Transverse colon (tissue), 4 donors: ENCODE measurements at regions of chr11 and their contacts with region 1.

Region 1: GRCh38 chr11:13772223-13773046 is 104.0 kb downstream of the FAR1 start:
- DNase-seq: no peak
- H3K4me3 ChIP-seq: no peak overlapping the region
- H3K27ac ChIP-seq: no peak overlapping the region
- H3K4me1 ChIP-seq: peaks cover 0 to 5% (median 0%) of the 10 kb centered on the region in 4 donors
- H3K27me3 ChIP-seq: no peaks in the 10 kb centered on the region
- CTCF ChIP-seq: peak; percentile 35 to 52 (median 49)
- EP300 ChIP-seq: no peak
- POLR2A ChIP-seq: no peak

Region 2: DNA sequence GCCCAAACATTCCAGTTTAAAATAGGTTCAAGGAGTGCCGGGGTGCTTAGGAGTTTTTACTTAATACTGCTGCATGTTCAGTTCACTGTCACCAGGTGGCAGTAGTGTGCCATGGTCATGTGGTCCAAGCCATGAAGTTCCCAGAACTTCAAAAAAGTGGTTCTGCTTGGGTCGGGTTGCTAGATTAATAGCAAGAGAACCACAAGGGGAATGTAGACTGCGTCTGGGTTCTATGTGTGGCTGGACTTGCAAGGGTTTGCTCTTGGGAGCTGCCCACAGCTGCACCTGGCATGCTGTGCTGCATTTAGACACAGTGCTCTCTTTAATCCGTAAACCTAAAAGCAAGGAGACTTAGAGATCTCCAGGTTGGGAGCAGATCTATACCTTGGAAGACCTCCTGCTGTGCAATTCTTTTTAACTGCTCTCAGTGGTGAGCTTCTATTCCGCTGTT is 183.6 kb after region 1 on chr11:
- in situ Hi-C with region 1: loop called in 1 of 4 experiments (anchors 10 kb)
- intact Hi-C with region 1: no loop called
- DNase-seq: peak; percentile 64
- H3K4me3 ChIP-seq: no peak overlapping the region
- H3K27ac ChIP-seq: no peak overlapping the region
- H3K4me1 ChIP-seq: peaks cover 0 to 4% (median 2%) of the 10 kb centered on the region in 4 donors
- H3K27me3 ChIP-seq: peaks cover under 1% of the 10 kb centered on the region
- CTCF ChIP-seq: peak; percentile 89 to 94 (median 90)
- EP300 ChIP-seq: no peak
- POLR2A ChIP-seq: no peak

Region 3: DNA sequence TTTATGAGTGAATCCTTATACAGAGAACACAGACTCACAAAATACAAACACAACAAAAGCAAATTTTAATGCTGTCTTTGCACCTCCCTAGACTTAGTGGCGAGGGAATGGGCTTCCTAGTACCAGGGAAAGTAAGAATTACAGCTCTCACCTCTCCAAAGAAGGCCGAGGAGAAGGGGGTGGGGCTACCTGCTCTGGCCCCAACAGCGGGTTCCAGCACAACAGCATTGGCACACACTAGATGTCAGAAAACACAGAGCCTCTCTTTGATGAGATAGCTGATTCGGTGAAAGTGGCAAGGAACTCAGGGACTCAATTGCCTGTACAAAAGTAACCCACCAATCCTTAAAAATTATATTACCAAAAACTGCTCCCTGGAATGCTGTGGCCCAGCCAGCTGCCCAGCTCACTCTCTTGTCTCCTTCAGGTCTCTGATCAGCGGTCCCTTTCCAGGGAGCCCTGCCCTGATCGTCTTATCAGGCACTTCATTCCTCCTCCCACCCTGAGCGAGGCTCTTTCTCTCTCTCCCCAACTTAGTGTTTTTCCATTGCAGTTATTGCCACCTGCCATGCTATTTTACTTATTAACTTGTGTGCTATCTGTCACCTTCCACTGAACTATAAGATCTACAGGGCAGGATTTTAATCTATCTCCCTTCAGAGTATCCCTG is 220.8 kb after region 1 on chr11:
- in situ Hi-C with region 1: no loop called
- intact Hi-C with region 1: no loop called
- DNase-seq: peak; percentile 14
- H3K4me3 ChIP-seq: peak overlapping the region in 1 of 4 donors; percentile 38
- H3K27ac ChIP-seq: peak overlapping the region in 3 of 4 donors; percentile 71 to 76 (median 73)
- H3K4me1 ChIP-seq: peaks cover 14 to 41% (median 33%) of the 10 kb centered on the region in 4 donors
- H3K27me3 ChIP-seq: no peaks in the 10 kb centered on the region
- CTCF ChIP-seq: no peak
- EP300 ChIP-seq: no peak
- POLR2A ChIP-seq: no peak

Region 4: DNA sequence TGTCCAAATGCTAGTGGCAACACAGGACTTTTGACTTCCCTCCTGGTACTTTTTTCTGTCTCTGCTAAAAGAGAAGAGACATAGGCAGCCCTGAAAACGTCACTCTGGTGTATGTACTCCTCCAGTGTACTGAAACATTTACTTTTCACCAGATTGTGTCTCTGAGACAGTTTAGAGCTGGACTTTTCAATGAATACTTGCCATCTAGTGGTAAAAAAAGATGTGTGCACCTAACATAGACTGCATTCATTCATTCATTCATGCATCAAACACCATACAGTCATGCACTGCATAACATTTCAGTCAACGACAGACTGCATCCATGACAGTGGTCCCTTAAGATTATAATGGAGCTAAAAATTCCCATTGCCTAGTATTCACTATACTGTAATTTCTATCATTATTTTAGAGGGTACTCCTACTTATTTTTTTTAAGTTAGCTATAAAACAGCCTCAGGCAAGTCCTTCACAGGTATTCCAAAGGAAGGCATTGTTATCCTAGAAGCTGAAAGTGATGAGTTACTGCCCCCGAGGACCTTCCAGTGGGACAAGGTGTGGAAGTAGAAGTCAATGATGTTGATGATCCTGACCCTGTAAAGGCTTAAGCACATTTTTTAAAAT is 376.3 kb after region 1 on chr11:
- in situ Hi-C with region 1: loop called in 1 of 4 experiments (anchors 10 kb)
- intact Hi-C with region 1: no loop called
- DNase-seq: no peak
- H3K4me3 ChIP-seq: no peak overlapping the region
- H3K27ac ChIP-seq: no peak overlapping the region
- H3K4me1 ChIP-seq: no peaks in the 10 kb centered on the region
- H3K27me3 ChIP-seq: no peaks in the 10 kb centered on the region
- CTCF ChIP-seq: peak; percentile 59 to 76 (median 60)
- EP300 ChIP-seq: no peak
- POLR2A ChIP-seq: no peak

Region 5: DNA sequence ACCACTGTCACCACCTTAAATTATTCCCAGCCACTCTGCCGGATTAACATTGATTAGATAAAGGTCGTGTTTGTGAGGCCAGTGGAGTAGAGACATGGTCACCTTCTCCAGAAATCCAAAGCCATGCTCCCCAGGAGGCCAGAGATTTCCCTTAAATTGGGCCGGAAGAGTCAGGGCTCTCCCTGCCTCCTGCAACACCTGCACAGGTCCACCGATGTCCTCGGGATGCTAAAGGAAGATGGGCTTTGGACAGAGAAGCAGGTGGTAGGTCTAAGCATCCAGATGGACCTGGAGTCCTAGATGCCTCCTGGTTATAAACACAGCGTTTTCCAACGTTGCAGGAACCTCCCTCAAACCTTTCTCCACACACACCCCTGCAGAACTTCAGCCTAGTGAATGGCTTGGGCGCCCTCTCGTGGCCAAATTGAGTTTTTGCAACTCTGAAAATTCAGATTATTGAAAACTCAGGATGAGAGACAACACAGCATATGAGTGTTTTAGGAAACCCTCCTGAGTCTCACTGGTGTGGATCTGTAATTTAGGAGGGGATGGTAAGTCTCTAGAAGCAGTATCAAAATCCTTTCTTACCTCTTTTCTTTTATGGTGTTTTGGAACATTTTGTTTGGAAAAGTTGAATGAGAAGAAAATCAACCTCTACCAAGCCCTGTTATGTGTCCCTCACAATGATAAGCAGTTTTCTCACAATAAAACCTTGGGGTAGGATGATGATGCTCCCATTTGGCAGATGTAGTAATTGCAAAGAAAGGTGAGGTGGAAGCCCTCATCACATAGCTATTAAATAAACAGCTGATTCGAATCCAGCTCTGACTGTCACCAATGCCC is 476.9 kb after region 1 on chr11:
- in situ Hi-C with region 1: loop called (anchors 10 to 25 kb)
- intact Hi-C with region 1: no loop called
- DNase-seq: peak; percentile 71
- H3K4me3 ChIP-seq: no peak overlapping the region
- H3K27ac ChIP-seq: no peak overlapping the region
- H3K4me1 ChIP-seq: no peaks in the 10 kb centered on the region
- H3K27me3 ChIP-seq: no peaks in the 10 kb centered on the region
- CTCF ChIP-seq: peak; percentile 85 to 90 (median 89)
- EP300 ChIP-seq: no peak
- POLR2A ChIP-seq: no peak

Region 6: DNA sequence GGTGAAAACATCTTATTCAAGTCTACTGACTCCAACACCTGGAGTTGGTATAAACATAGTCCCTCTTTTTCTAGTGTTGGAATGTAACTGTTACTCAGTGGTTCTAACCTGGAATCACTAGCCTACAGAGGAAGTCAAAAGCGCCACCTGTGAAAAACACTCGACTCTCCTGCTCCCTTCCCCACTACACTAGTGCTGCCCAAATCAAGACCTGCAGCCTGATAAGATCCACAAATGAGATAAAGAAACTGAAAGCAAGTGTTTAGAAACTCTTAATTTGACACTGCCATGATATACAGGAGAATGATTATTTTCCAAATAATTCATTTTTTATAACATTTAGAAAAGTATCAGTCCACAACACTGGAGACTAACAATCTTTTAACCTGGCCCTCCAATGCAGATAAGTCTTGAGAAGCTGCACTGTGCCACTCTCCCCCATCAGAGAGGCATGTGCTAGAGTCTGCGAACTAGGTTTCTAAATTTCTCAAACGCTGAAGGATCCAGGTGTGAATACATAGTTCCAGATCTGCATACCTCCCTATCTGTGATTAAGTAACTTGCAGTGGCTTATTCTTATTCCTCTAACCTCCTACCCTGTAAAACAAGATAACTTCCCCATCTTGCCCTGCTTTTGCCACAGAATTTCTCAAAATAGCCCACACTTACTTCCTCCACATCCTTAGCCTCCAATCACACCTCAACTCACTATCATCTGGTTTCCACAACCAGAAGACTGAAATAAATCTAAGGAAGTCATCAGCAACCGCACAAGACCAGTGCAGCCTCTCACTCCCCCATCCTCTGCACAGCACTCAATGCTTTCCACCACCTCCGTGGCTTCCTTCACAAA is 498.5 kb after region 1 on chr11:
- in situ Hi-C with region 1: loop called in 1 of 4 experiments (anchors 25 kb)
- intact Hi-C with region 1: no loop called
- DNase-seq: no peak
- H3K4me3 ChIP-seq: no peak overlapping the region
- H3K27ac ChIP-seq: no peak overlapping the region
- H3K4me1 ChIP-seq: no peaks in the 10 kb centered on the region
- H3K27me3 ChIP-seq: no peaks in the 10 kb centered on the region
- CTCF ChIP-seq: no peak
- EP300 ChIP-seq: no peak
- POLR2A ChIP-seq: no peak